Ascending aorta (tissue), 2 donors: ENCODE measurements at regions of chr3 and their contacts with region 1.

Region 1: DNA sequence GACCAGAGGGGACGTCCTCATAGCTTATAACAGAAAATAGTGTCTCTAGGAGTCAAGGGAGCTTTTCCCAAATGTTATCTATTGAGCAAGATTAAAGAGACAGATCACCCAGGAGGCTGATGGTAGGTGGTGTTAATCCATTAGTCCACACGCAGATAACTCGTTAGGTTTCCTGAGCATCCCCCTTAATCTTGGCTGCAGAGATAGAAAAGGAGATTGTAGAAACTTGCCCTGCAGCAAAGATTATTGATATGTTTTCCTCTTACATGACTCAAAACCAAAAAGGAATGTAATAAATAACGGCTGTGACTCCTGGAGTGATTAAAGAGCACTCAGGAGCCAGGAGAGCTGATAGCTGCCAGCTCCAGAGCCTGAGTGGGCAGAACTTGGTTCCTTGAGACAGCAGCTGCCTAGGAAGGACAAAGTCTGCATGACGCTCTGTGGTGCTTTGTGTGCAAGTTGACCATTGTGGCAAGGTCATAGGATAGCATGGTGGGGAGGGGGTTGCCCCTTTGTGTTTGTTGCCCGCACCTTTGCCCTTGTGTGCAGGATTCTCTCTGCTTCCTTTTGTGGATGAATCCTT is 234.8 kb downstream of the PTPRG start:
- DNase-seq: no peak
- H3K4me3 ChIP-seq: no peak overlapping the region
- H3K27ac ChIP-seq: peak overlapping the region in 1 of 2 donors; percentile 41
- H3K4me1 ChIP-seq: peaks cover 0 to 26% of the 10 kb centered on the region in 2 donors
- H3K27me3 ChIP-seq: no peaks in the 10 kb centered on the region
- CTCF ChIP-seq: no peak

Region 2: GRCh38 chr3:60657972-60658371 is 1138.2 kb before region 1 on chr3:
- intact Hi-C with region 1: no loop called
- DNase-seq: no peak
- H3K4me3 ChIP-seq: no peak overlapping the region
- H3K27ac ChIP-seq: no peak overlapping the region
- H3K4me1 ChIP-seq: no peaks in the 10 kb centered on the region
- H3K27me3 ChIP-seq: no peaks in the 10 kb centered on the region
- CTCF ChIP-seq: no peak

Region 3: DNA sequence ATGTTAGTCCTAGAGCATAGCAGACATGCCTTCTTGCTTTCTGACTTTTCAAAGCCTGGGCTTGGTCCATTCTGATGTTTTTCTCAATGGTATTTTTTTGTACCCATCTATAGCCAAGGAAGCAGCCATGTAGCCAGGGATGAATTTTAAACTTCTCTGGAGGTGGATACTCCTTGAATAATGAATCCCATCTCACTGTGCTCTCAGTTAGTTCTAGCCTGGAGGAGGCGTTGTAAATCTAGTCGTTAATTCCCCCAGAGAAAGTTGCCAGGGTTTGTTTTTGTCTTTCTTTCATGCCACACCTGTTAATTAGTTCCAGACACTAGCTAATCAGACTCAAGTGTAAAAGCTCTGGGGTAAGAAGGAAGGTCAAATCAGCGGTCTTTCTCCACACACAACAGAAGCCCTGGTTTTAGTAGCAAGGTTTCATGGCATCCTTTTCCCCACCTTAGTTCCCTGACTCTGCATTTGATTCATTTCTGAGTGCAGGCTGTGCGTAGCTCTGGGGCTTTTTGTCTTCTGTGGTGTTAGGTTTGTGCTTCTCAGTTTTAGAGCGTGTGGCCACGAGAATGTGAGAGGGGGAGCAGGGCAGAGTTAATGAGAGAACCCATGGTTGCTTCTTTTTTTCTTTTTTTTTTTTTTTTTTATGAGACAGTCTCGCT is 215.1 kb before region 1 on chr3:
- intact Hi-C with region 1: loop called (anchors 5 kb)
- DNase-seq: no peak
- H3K4me3 ChIP-seq: no peak overlapping the region
- H3K27ac ChIP-seq: peak overlapping the region; percentile 33 to 34
- H3K4me1 ChIP-seq: peaks cover 0 to 26% of the 10 kb centered on the region in 2 donors
- H3K27me3 ChIP-seq: no peaks in the 10 kb centered on the region
- CTCF ChIP-seq: no peak